B cell (primary cell): ENCODE measurements at regions of chr2 and their contacts with region 1.

Region 1: DNA sequence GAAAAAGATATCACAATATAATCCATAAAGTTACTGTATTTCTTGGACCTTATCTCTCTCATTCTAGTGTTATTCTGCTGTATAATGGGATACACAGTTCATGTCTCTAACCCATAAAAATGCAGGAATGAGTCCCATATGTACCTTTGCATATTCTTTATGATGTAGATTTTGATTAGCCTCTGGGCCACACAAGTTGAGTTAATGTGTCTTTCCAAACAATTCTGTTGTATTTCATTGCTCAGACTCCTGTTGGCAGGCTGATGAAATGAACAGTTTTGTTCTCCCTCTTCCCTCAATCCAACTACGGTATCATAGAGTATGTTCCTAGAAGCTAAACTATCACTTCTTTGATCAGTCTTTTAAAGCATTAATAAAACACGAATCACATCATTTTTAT is 113.2 kb upstream of the SATB2 start:
- DNase-seq: no peak
- ATAC-seq: no peak
- H3K4me3 ChIP-seq: no peak overlapping the region
- H3K4me3 Mint-ChIP-seq: no peak overlapping the region
- H3K27ac ChIP-seq: no peak overlapping the region
- H3K27ac Mint-ChIP-seq: no peak overlapping the region
- H3K4me1 ChIP-seq: no peaks in the 10 kb centered on the region
- H3K4me1 Mint-ChIP-seq: no peaks in the 10 kb centered on the region
- H3K27me3 ChIP-seq: no peaks in the 10 kb centered on the region
- H3K27me3 Mint-ChIP-seq: peaks cover 9% of the 10 kb centered on the region
- CTCF ChIP-seq: no peak

Region 2: DNA sequence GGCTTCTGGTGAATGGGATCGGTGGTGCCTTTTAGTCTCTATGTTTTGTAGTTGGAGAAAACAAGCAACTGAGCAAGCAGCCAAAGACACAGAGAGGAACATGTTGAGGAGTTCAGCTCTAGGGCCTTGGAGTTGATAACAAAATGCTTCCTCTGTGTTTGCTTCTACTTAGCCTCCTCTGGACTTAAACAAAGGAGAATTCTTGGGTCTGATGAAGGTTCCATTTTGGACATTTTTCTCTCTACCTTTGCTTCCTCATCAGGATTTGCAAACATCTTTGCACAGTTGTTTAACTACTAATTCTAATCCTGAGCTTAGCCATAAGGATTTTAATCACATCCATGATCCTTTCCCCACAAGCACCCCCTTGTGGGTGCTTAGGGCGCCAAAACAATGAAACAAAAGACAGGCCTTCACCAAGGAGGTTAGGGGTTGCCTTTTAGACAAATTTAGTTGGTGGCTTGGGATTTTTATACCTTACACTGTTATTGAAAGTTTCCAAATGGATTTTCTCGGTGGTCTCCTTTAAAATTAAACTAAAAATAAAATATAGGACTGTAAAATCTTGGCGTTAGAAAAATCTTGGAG is 35.4 kb after region 1 on chr2:
- CTCF ChIA-PET with region 1: no interaction called
- POLR2A ChIA-PET with region 1: no interaction called
- intact Hi-C with region 1: loop called (anchors 1 kb)
- DNase-seq: no peak
- ATAC-seq: no peak
- H3K4me3 ChIP-seq: no peak overlapping the region
- H3K4me3 Mint-ChIP-seq: no peak overlapping the region
- H3K27ac ChIP-seq: no peak overlapping the region
- H3K27ac Mint-ChIP-seq: no peak overlapping the region
- H3K4me1 ChIP-seq: peaks cover 0 to 3% of the 10 kb centered on the region in 2 donors
- H3K4me1 Mint-ChIP-seq: peaks cover 6% of the 10 kb centered on the region
- H3K27me3 ChIP-seq: peaks cover 0 to 3% (median 0%) of the 10 kb centered on the region in 4 experiments
- H3K27me3 Mint-ChIP-seq: peaks cover 4% of the 10 kb centered on the region
- CTCF ChIP-seq: no peak

Region 3: DNA sequence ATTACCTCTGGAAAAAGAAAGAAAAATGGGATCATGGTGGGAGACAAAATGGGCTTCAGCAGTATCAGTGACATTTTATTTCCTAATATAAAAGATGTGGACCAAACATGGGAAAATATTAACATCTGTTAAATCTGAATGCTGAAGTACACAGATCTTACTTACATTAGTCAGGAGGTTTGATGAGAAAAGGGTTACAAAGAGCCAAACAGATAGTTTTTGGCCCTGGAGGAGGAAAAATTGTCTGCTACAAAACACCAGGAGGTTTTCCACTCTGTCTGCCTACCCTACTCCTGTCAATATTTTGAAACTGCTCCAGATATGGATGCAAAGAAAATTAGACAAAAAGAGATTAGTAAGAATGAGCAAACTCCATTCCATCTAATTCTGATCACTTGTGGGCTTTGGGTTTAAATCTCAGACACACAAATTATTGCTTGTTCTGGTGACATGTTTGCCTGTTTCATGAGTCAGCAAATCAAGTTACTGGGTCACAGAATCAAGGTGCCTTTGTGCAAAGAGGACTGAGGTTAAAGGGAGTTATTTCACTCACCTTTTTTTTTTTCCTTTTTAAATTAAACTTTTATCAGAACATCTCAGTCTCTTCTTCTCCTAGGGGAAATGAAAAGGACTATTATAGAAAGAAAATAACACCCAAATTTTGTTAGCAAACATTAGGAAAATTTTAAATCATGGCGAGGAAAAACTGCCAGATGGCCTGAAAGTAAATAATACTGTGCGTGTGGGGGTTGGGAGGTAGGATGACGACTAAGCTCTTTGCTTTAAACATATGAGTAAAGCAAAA is 648.6 kb after region 1 on chr2:
- CTCF ChIA-PET with region 1: no interaction called
- POLR2A ChIA-PET with region 1: no interaction called
- intact Hi-C with region 1: no loop called
- DNase-seq: no peak
- ATAC-seq: no peak
- H3K4me3 ChIP-seq: no peak overlapping the region
- H3K4me3 Mint-ChIP-seq: no peak overlapping the region
- H3K27ac ChIP-seq: no peak overlapping the region
- H3K27ac Mint-ChIP-seq: no peak overlapping the region
- H3K4me1 ChIP-seq: no peaks in the 10 kb centered on the region
- H3K4me1 Mint-ChIP-seq: no peaks in the 10 kb centered on the region
- H3K27me3 ChIP-seq: peaks cover 0 to 3% (median 0%) of the 10 kb centered on the region in 4 experiments
- H3K27me3 Mint-ChIP-seq: no peaks in the 10 kb centered on the region
- CTCF ChIP-seq: no peak